Activated T-helper 1 cell treated with anti-CD3 and anti-CD28 coated beads, Interleukin-12 subunit alpha, Interleukin-12 subunit beta, Interleukin-2, Interleukin-4 antibody, amounts not matched to agents 30 ng/mL and 10 ng/mL and 1 ng/mL, durations not matched to agents 14 hours and 24 hours and 36 hours (primary cell): ENCODE measurements at regions of chr12 and their contacts with region 1.

Region 1: DNA sequence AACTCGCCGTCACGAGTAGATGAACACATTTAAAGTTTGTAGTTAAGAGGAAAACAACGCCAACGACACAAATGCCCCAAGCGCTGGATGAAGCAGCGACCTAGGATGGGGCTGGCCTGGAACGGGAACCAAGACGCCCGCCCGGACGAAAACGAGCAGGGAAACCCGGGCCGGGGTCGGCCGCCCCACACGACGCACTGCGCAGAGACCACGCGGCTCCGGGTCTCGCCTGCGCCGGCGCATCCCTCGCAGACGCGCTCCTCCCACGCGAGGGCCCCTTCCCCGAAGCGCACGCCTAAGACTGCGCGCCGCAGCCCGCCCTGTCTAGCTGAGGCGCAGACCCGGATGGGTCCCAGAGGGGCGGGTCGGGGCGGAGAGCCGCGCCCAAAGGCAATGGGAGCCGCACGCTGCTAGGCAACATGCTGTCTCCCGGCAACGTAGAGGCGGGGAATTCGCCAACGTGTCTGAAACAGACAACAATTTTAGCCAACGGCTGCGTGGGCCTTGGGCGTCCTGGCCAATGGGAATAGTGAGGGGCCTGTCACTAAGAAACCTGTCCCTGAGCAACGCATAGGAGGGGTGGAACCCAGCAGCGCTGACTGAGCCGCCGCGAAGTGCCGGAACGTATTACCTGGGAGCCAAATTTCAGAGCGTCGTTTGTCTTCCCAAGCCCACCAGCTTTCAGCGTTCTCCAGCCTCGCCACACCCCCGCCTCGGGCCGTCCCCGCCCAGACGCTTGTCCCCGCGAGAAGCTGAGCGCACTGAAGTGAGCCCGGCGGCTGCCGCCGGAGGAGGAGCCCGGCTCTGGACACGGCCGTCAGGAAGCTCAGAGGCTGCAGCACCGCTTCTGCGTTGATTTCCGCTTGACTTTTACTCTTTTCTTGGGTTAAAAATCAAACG is 21.0 kb upstream of the CHFR start:
- DNase-seq: peak; percentile 92
- H3K4me3 Mint-ChIP-seq: peak overlapping the region; percentile 88
- H3K27ac Mint-ChIP-seq: peak overlapping the region; percentile 91
- H3K4me1 Mint-ChIP-seq: no peaks in the 10 kb centered on the region
- H3K27me3 Mint-ChIP-seq: peaks cover 11% of the 10 kb centered on the region

Region 2: DNA sequence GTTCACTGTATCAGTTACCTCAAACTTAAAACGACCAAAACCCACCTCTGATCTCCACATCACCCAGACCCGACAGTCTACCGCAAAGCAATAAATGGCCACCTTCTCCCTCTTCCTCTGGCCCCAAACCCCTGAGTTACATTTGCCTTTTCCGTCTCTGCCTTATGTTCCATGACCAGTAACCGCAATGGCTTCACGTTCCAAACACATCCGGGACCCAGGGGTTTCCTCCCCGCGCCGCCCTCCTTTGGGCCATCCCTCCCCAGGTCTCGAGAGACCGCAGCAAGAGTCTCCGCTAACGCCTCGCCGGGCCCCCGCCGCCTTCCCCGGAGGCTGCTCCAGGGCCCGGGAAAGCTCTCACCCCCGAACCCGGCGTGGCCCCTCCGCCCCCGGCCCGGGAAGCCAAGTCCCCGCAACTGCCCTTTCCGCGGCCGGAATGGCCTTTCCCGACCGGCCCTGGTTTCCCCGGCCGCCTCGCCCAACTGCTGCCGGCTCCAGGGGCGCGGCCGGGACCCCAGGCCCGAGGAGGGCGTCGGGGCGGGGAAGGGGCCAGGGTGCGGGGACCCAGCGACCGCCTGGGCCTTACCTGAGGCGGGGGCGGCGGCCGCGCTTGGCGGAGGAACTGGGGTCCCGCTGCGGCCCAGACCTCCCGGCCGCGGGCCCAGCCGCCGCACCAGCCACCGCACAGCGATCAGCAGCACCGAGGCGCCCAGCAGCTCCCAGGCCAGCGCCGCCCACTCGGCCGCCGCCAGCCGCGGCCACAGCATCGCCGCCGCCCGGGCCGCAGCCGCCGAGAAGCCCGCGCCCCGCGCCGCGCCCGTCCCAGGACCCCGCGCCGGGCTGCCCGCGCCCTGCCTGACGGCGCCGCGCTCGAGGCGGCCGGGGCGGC is 147.1 kb before region 1 on chr12 and contains the start of gene ANKLE2:
- intact Hi-C with region 1: loop called (anchors 2 kb)
- DNase-seq: peak; percentile 74
- H3K4me3 Mint-ChIP-seq: peak within 1 kb of the TSS; percentile 93
- H3K27ac Mint-ChIP-seq: peak within 1 kb of the TSS; percentile 96
- H3K4me1 Mint-ChIP-seq: peaks cover 24% of the 10 kb centered on the region
- H3K27me3 Mint-ChIP-seq: no peaks in the 10 kb centered on the region
- total RNA-seq, gene ANKLE2: 151 and 156 TPM in 2 replicates

Region 3: GRCh38 chr12:132956011-132956788 is 47.8 kb after region 1 on chr12 and contains the start of gene ZNF605:
- intact Hi-C with region 1: loop called (anchors 1 kb)
- DNase-seq: peak; percentile 85
- H3K4me3 Mint-ChIP-seq: peak within 1 kb of the TSS; percentile 98
- H3K27ac Mint-ChIP-seq: peak within 1 kb of the TSS; percentile 94
- H3K4me1 Mint-ChIP-seq: peaks cover 18% of the 10 kb centered on the region
- H3K27me3 Mint-ChIP-seq: no peaks in the 10 kb centered on the region
- total RNA-seq, gene ZNF605: 6.3 and 7.5 TPM in 2 replicates

Region 4: DNA sequence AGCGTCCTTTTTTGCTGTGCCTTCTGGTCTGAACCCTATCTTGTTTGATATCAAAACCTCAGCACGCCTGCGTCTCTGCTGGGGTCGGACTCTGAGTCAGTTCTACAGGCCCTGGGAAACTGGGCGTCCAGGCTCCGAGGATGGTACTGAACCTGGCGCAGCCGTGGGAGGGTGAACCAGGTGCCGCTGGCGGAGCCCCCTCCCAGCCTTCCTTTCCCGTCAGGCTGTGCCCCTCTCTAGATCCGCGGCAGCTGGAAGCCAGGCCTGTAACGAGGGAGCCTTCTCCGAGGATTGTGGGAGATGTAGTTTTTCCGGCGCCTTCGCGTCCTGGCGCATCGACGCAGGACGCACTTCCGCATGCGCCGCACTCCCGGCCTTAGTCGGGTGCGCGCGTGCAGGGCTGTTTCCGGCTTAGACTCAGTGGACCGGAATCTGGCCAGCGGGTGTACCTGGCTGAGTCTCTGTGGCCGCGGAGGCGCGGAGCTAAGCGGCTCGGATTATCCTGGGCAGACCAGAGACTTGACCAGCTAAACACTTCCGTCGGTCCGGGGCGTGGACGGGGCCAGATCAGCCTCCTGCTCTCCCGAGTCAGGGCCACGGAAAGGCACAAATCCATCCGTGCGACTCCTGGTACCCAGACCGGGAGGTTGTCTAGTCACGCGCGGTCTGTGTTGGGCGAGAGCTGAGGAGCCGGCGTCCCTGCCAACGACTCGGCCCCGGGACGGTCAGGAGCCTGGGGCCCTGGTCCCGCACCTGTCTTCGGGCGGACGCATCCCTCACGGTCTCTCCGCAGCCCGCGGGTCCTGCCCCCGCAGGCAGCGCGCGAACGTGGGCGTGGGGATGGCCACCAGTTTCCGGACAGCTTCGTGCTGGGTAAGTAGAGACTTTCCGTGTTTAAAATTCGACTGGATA is 77.9 kb after region 1 on chr12 and contains the start of gene ZNF26:
- intact Hi-C with region 1: loop called (anchors 2 kb)
- DNase-seq: peak; percentile 84
- H3K4me3 Mint-ChIP-seq: peak within 1 kb of the TSS; percentile 90
- H3K27ac Mint-ChIP-seq: peak within 1 kb of the TSS; percentile 92
- H3K4me1 Mint-ChIP-seq: peaks cover 22% of the 10 kb centered on the region
- H3K27me3 Mint-ChIP-seq: no peaks in the 10 kb centered on the region
- total RNA-seq, gene ZNF26: 18.2 and 22.1 TPM in 2 replicates

Region 5: DNA sequence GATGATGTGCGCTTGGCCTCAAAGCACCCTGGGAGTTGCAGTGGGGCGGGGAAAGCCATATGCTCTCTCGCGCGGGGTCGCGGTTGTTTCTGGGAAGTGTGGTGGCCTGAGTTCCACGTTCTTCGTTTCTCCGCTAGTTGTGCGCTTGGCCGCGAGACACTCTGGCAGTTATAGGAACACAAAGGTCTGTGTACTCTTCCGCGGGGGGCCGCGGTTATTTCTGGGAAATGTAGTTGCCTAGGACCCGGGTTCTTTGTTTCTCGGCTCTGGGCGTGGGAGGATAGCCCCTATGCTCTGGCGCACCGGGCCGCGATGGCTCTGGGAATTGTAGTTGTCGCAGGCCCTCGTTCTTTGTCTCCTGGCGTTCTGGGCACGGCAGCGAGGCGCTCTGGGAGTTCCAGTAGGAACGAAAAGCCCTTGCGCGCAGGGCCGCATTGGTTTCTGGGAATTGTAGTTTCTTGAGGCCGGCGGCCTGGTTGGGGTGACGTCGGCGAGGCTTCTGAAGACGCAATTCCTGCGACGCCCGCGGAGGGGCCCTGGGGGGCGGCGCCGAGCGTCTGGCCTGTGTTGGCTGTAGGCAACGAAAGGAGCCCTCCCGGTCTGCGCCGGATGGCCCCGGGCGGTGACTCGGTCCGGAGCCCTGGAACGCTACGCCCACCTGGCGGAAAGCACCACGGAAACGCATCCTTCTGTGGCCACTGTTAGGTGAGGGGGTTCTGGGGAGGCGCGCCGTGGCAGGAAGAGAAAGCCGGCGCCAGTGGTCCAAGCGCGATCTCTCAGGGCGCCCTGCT is 172.2 kb after region 1 on chr12 and contains the start of gene ZNF140:
- intact Hi-C with region 1: loop called (anchors 1 kb)
- DNase-seq: peak; percentile 93
- H3K4me3 Mint-ChIP-seq: no peak within 1 kb of the TSS
- H3K27ac Mint-ChIP-seq: peak within 1 kb of the TSS; percentile 84
- H3K4me1 Mint-ChIP-seq: no peaks in the 10 kb centered on the region
- H3K27me3 Mint-ChIP-seq: no peaks in the 10 kb centered on the region
- total RNA-seq, gene ZNF140: 15.0 and 15.1 TPM in 2 replicates

Region 6: GRCh38 chr12:133181238-133181959 is 273.0 kb after region 1 on chr12 and contains the start of gene ZNF268:
- intact Hi-C with region 1: loop called (anchors 1 kb)
- DNase-seq: peak; percentile 87
- H3K4me3 Mint-ChIP-seq: peak within 1 kb of the TSS; percentile 97
- H3K27ac Mint-ChIP-seq: peak within 1 kb of the TSS; percentile 95
- H3K4me1 Mint-ChIP-seq: peaks cover 20% of the 10 kb centered on the region
- H3K27me3 Mint-ChIP-seq: no peaks in the 10 kb centered on the region
- total RNA-seq, gene ZNF268: 16.7 and 21.5 TPM in 2 replicates